ENCODE measurements at regions of chr1 and their contacts with region 1.

Region 1: GRCh38 chr1:154335025-154335714 is 9.8 kb downstream of the ATP8B2 start:
- DNase-seq: peak; percentile 69
- ATAC-seq: peak; percentile 98
- H3K4me3 Mint-ChIP-seq: peak overlapping the region; percentile 25
- H3K27ac Mint-ChIP-seq: peak overlapping the region; percentile 61
- H3K4me1 Mint-ChIP-seq: peaks cover 22% of the 10 kb centered on the region
- H3K27me3 Mint-ChIP-seq: no peaks in the 10 kb centered on the region
- CTCF ChIP-seq: peak; percentile 52

Region 2: GRCh38 chr1:154183045-154183915 is 151.9 kb before region 1 on chr1:
- CTCF ChIA-PET with region 1: interaction called, 4 read pairs
- POLR2A ChIA-PET with region 1: no interaction called
- intact Hi-C with region 1: loop called (anchors 1 kb)
- DNase-seq: peak; percentile 93
- ATAC-seq: peak; percentile 76
- H3K4me3 Mint-ChIP-seq: peak overlapping the region; percentile 100
- H3K27ac Mint-ChIP-seq: peak overlapping the region; percentile 100
- H3K4me1 Mint-ChIP-seq: peaks cover 48% of the 10 kb centered on the region
- H3K27me3 Mint-ChIP-seq: peaks cover 2% of the 10 kb centered on the region
- CTCF ChIP-seq: no peak

Region 3: GRCh38 chr1:154198756-154199562 is 136.2 kb before region 1 on chr1:
- CTCF ChIA-PET with region 1: interaction called, 15 read pairs
- POLR2A ChIA-PET with region 1: no interaction called
- intact Hi-C with region 1: loop called (anchors 1 kb)
- DNase-seq: no peak
- ATAC-seq: peak; percentile 75
- H3K4me3 Mint-ChIP-seq: no peak overlapping the region
- H3K27ac Mint-ChIP-seq: no peak overlapping the region
- H3K4me1 Mint-ChIP-seq: no peaks in the 10 kb centered on the region
- H3K27me3 Mint-ChIP-seq: peaks cover 3% of the 10 kb centered on the region
- CTCF ChIP-seq: no peak

Region 4: DNA sequence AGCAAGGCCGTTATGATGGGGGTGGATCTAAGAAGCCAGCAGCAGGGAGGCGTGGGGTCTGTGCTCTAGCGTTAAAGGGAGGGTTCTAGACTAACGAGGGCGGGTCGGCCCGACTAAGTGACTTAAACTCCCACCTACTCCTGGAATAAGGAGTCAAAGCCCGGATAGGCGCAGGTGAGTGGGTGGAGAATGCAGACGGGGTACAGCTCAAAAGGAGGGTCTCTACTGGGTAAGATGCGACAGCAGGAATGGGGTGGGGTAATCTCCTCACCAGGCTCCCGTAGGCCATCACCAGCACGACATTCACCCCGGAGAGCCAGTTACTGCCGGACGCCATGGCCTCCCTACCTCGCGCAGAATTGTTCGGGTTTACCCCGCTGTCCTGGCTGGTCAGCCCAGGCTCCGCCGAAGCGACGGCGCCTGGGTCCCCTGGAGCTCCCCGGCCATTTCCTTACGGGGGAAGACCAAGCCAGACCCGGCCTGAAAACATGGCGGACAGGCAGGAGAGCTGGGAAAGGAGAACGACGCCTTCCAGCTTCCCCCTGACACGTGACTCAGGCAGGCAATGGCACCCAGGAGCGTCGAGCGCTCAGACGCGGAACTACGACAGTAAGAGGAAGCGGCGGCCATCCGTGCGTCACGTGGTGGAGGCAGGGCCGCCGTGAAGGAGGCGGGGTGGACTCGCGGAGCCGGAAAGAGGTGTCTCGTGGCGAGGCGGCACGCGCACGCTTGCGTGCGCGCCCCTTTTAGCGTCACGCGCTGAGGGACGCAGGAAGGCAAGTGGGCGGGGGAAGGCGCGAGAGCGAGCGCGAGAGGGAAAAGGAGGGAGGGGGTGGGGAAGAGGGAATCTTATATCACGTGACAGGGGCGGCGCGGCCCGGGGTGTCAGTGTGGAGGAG is 114.8 kb before region 1 on chr1 and contains the start of gene UBAP2L:
- CTCF ChIA-PET with region 1: interaction called, 4 read pairs
- POLR2A ChIA-PET with region 1: interaction called, 10 read pairs
- intact Hi-C with region 1: no loop called
- DNase-seq: peak; percentile 98
- ATAC-seq: peak; percentile 84
- H3K4me3 Mint-ChIP-seq: peak within 1 kb of the TSS; percentile 99
- H3K27ac Mint-ChIP-seq: peak within 1 kb of the TSS; percentile 100
- H3K4me1 Mint-ChIP-seq: peaks cover 75% of the 10 kb centered on the region
- H3K27me3 Mint-ChIP-seq: no peaks in the 10 kb centered on the region
- CTCF ChIP-seq: no peak
- total RNA-seq, gene UBAP2L: 209 and 234 TPM in 2 replicates

Region 5: DNA sequence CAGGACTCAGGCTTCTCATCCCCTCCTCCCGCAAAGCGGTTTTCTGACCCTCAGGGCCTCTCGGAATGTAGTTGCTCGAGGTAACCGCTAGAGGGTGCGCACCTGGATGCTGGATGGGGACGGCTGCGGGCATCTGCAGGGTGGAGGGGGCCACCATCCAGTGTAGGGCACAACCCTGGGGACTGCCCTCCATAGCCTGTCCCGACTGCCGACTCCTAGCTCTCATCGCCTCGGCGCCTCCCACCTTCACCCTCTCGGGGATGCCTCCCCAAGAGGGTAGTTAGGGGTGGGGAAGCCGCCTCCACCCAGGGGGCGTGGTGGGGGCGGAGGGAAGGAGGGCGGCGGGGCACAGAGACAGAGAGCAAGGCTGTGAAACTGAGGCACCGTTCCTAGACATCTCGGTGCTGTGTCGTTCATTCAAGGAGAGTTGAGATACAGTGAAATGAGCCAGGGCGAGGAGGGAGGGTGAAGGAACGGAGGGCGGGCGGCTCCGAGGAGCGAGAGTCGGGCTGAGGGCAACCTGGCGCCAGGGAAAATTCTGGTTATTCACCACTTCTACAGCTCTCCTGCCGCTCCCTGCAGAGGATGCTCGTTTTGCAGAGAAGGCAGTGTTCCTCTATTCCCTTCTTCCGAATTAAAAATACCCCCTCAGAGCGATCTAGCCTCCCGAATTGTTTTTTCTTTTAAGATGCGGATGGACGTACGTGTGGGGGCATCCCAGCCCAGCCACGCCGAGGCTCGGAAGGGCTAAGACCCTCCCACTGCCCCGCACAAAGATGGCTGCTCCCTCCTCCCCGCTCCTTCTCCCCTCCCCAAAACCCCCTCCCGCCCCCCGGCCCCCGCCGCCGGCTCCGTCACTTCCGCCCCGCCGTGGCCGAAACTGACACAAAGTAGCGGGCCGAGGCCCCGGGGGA is 10.2 kb before region 1 on chr1 and contains the start of gene ATP8B2:
- CTCF ChIA-PET with region 1: interaction called, 100 read pairs
- POLR2A ChIA-PET with region 1: interaction called, 19 read pairs
- intact Hi-C with region 1: loop called (anchors 1 kb)
- DNase-seq: peak; percentile 74
- ATAC-seq: peak; percentile 67
- H3K4me3 Mint-ChIP-seq: peak within 1 kb of the TSS; percentile 95
- H3K27ac Mint-ChIP-seq: peak within 1 kb of the TSS; percentile 88
- H3K4me1 Mint-ChIP-seq: peaks cover 41% of the 10 kb centered on the region
- H3K27me3 Mint-ChIP-seq: peaks cover 17% of the 10 kb centered on the region
- CTCF ChIP-seq: peak; percentile 71
- total RNA-seq, gene ATP8B2: 24.3 and 27.3 TPM in 2 replicates

Region 6: DNA sequence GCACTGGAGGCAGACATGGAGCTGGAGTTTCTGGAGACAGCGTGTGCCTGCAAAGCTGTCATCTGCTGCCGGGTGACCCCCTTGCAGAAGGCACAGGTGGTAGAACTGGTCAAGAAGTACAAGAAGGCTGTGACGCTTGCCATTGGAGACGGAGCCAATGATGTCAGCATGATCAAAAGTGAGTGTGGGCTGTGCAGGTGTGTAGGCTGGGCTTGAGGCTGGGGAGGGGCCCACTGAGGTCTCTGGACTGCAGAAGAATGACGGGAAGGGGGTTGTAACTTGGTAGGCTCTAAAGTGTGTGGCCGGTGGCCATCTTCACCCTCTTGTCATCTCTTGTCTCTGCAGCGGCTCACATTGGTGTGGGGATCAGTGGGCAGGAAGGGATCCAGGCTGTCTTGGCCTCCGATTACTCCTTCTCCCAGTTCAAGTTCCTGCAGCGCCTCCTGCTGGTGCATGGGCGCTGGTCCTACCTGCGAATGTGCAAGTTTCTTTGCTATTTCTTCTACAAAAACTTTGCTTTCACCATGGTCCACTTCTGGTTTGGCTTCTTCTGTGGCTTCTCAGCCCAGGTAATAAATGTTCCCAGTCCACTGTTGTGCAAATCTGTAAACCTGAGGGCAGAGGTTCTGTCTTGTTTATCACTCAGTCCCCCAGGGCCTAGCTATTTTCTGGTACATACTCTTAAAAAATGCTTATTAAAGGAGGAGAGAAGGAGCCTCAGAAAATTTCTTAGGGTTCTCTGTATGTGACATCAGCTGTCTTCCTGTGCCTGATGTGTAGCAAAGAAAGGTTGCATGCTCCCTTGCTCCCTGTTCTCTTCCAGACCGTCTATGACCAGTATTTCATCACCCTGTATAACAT is 10.0 kb after region 1 on chr1:
- CTCF ChIA-PET with region 1: interaction called, 14 read pairs
- POLR2A ChIA-PET with region 1: no interaction called
- intact Hi-C with region 1: no loop called
- DNase-seq: no peak
- ATAC-seq: peak; percentile 31
- H3K4me3 Mint-ChIP-seq: no peak overlapping the region
- H3K27ac Mint-ChIP-seq: no peak overlapping the region
- H3K4me1 Mint-ChIP-seq: peaks cover 9% of the 10 kb centered on the region
- H3K27me3 Mint-ChIP-seq: no peaks in the 10 kb centered on the region
- CTCF ChIP-seq: no peak

Region 7: DNA sequence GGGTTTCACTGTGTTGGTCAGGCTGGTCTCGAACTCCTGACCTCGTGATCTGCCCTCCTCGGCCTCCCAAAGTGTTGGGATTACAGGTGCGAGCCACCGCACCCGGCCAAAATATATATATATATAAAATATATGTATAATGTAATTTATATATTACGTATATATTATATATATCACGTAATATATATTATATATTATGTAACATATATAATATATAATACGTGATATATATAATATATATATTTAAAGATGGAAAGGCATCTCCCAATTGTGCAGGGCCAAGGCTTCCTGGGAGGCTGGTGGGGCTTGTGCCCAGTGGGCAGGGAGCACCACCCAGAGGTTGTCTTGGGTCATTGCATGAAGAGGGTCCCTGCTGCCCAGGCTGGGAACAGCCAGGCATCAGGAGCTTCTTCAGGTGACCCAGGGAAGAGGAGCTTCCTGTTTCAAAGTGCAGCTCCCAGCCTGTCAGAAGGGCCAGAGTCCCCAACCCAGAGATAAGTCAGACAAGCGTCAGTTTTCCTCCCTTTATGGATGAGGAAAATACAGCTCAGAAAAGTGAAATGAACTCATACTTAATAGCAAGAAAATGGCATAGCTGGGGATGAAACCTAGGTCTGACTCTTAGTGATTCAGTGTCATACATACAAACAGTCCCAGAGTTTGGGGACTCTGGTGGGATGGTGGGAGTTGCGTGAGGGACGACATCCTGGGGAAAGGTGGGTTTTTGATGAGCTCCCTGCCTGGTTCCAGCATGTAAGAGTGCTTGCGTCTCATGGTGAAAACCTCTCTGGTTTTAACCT is 211.3 kb after region 1 on chr1:
- CTCF ChIA-PET with region 1: interaction called, 4 read pairs
- POLR2A ChIA-PET with region 1: no interaction called
- intact Hi-C with region 1: loop called (anchors 2 kb)
- DNase-seq: peak; percentile 27
- ATAC-seq: peak; percentile 97
- H3K4me3 Mint-ChIP-seq: no peak overlapping the region
- H3K27ac Mint-ChIP-seq: no peak overlapping the region
- H3K4me1 Mint-ChIP-seq: peaks cover 5% of the 10 kb centered on the region
- H3K27me3 Mint-ChIP-seq: no peaks in the 10 kb centered on the region
- CTCF ChIP-seq: no peak